Right ventricle myocardium inferior (tissue), 1 donor: ENCODE measurements at regions of chr11 and their contacts with region 1.

Region 1: GRCh38 chr11:67401495-67402191 is at the start of gene PPP1CA:
- DNase-seq: peak; percentile 95
- ATAC-seq: peak; percentile 91
- total RNA-seq, gene PPP1CA: 112 TPM

Region 2: DNA sequence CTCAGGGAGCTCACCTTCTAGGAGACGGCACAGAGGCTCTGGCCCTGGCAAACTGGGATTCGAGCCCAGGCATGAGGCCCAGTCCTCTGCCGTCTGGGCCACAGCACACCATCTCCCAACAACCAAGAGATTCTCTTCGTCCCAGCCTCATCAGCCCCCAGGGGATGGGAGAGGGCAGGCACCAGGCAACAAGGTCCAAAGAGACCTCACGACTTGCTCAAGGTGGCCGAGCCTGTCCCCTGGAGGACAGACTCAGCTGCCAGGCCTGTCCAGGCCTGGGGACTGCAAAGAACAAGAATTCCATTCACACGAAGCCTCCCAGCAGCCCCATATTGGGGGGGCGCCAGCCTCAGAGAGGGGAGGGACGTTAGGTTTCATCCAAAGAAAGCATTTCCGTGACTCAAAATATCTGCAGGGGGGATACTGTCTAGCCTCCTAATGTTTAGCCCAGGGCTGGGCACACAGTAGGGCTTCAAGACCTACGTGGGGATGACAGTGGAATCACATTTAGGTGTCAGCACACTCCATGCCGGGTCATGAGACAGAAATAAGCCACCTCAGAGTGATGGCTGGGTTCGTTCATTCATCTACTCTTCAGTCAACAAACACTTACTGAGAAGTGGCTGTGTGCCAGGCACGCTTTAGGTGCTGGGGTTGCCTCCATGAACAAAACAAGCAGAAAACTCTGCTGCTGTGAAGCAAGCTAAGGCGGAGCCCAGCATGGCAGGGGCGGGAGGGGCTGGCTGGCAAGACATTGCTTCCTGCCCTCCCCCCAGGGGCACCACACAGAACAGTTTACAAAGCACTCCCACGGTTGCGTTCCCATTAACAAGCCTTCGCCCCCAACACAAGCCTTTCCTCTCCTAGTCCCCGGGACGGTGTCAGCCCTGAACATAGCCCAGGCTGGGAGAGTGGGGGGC is 15.0 kb after region 1 on chr11:
- intact Hi-C with region 1: loop called (anchors 2 kb)
- DNase-seq: no peak
- ATAC-seq: no peak

Region 3: GRCh38 chr11:67468835-67469811 is 67.5 kb after region 1 on chr11 and contains the start of gene TMEM134:
- intact Hi-C with region 1: loop called (anchors 5 kb)
- DNase-seq: peak; percentile 97
- ATAC-seq: peak; percentile 95
- total RNA-seq, gene TMEM134: 85.3 TPM

Region 4: GRCh38 chr11:67583247-67584204 is 181.9 kb after region 1 on chr11 and contains the start of gene GSTP1:
- intact Hi-C with region 1: loop called (anchors 1 kb)
- DNase-seq: peak; percentile 97
- ATAC-seq: peak; percentile 98
- total RNA-seq, gene GSTP1: 393 TPM

Region 5: GRCh38 chr11:67648140-67649123 is 246.8 kb after region 1 on chr11:
- intact Hi-C with region 1: no loop called
- DNase-seq: no peak
- ATAC-seq: no peak